PC-9 (cell line): ENCODE measurements at regions of chr14 and their contacts with region 1.

Region 1: GRCh38 chr14:69586404-69586803 is 11.7 kb upstream of the CCDC177 start:
- DNase-seq: no peak
- H3K4me3 ChIP-seq: no peak overlapping the region
- H3K27ac ChIP-seq: no peak overlapping the region
- H3K4me1 ChIP-seq: no peaks in the 10 kb centered on the region
- H3K27me3 ChIP-seq: no peaks in the 10 kb centered on the region
- CTCF ChIP-seq: no peak

Region 2: GRCh38 chr14:69535230-69535848 is 51.1 kb before region 1 on chr14:
- CTCF ChIA-PET with region 1: no interaction called
- POLR2A ChIA-PET with region 1: no interaction called
- intact Hi-C with region 1: loop called (anchors 2 kb)
- DNase-seq: peak in 1 of 2 experiments; percentile 34
- H3K4me3 ChIP-seq: no peak overlapping the region
- H3K27ac ChIP-seq: no peak overlapping the region
- H3K4me1 ChIP-seq: peaks cover 33% of the 10 kb centered on the region
- H3K27me3 ChIP-seq: no peaks in the 10 kb centered on the region
- CTCF ChIP-seq: peak; percentile 74

Region 3: DNA sequence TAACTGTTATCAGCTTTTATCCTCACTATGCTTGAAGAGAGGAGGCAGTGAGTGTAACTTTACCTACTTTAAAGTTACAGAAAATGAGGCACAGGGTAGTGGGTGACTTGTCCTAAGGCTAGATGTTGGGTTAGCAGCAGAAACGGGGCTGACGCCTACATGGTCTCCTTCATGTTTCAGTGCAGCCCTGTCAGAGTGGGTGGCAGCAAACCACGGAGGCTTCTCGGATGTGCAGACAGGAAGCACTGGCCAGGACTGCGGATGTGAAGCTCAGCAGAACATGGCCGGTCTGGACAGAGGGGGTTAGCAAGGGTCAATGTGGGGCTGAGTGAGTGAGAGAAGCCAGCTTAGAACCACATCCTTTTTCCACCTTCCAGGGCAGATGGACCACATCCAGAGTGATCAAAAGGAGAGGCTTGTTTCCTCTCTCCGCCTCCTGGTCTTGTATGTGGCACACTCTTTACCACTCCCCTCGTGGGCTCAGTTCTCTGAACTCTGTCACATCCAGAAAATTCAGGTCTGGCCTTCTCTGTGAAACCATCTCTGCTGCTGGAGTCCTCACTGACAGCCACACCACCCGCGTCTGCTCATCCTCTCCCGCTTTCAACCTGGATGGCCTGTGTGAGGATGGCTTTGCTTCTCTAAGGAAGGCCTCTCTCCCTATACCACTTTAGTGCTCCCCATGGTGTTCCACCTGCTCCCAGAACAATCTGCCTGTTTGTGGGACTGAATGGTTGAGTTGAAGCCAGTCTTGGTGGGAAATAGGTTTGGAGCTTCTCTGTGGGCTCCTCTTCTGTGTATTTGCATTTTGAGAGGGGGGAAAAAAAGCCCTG is 39.1 kb after region 1 on chr14:
- CTCF ChIA-PET with region 1: no interaction called
- POLR2A ChIA-PET with region 1: no interaction called
- intact Hi-C with region 1: no loop called
- DNase-seq: no peak
- H3K4me3 ChIP-seq: no peak overlapping the region
- H3K27ac ChIP-seq: no peak overlapping the region
- H3K4me1 ChIP-seq: peaks cover under 1% of the 10 kb centered on the region; the same call in 1 of the 2 replicates
- H3K27me3 ChIP-seq: no peaks in the 10 kb centered on the region
- CTCF ChIP-seq: no peak

Region 4: DNA sequence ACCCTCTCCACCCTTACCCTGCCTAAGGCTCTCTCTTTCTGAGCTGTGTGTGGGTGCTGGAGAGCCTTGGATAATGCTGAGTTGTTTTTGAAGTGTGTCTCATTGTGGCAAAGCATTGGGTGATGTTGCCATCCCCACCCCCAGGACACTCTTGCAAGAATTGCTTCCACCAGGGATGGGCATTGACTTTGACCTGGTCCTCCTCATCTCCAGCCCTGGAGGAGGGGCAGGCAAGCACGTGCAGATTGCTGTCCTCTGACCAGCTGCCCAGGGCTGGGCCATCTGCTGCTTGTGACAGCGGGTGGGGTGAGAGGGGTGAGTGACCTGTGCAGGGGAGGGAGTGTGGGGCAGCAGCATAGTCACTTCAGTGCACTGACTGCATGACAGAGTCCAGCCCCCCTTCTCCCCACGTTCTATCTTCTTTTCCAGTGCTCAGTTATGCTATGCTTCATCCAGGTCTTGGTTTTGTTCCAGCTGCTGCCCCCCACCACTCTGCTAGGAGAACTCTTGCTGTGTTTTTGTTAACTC is 51.2 kb after region 1 on chr14:
- CTCF ChIA-PET with region 1: no interaction called
- POLR2A ChIA-PET with region 1: no interaction called
- intact Hi-C with region 1: no loop called
- DNase-seq: no peak
- H3K4me3 ChIP-seq: no peak overlapping the region
- H3K27ac ChIP-seq: no peak overlapping the region
- H3K4me1 ChIP-seq: peaks cover 22% of the 10 kb centered on the region
- H3K27me3 ChIP-seq: no peaks in the 10 kb centered on the region
- CTCF ChIP-seq: no peak

Region 5: GRCh38 chr14:69657950-69658355 is 71.5 kb after region 1 on chr14:
- CTCF ChIA-PET with region 1: no interaction called
- POLR2A ChIA-PET with region 1: no interaction called
- intact Hi-C with region 1: loop called (anchors 2 kb)
- DNase-seq: peak; percentile 84 to 98
- H3K4me3 ChIP-seq: peak overlapping the region; percentile 22; the same call in 1 of the 2 replicates
- H3K27ac ChIP-seq: peak overlapping the region; percentile 90
- H3K4me1 ChIP-seq: peaks cover 89% of the 10 kb centered on the region
- H3K27me3 ChIP-seq: no peaks in the 10 kb centered on the region
- CTCF ChIP-seq: no peak

Region 6: DNA sequence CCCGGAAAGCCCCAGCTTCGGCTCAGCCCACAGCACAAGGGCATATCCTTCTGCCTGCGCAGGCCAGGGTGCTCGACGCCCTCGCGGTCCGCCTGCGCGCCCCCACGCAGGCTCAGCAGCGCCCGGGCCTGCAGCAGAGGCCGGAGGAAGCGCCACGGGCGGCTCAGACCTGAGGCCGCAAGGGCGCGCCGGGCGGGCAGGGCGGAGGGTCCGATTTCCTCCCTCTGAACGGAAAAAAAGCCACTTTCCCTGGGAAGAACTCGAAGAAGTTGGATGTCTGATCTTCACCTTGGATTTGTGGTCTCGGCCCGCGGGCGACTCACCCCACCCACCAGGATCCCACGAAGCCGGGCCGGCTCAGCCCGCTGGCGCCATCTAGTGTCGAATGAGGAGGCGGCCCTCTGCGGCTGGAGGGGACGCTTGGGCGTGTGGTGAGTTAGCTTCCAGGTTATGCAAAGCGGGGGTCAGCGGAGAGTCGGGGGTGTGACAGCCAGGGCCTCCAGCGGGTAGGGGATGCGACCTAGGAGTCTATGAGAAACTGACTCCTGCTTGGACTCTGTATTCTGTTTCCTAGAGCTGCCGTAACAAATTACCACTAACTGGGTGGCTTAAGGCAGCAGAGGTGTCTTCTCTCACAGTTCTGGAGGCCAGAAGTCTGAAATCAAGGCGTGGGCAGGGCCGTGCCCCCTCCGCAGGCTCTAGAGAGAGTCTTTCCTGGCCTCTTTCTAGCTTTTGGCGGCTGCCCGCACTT is 140.5 kb after region 1 on chr14:
- CTCF ChIA-PET with region 1: interaction called, 17 read pairs
- POLR2A ChIA-PET with region 1: no interaction called
- intact Hi-C with region 1: loop called (anchors 1 kb)
- DNase-seq: peak in 1 of 2 experiments; percentile 82
- H3K4me3 ChIP-seq: peak overlapping the region; percentile 52; the same call in 1 of the 2 replicates
- H3K27ac ChIP-seq: no peak overlapping the region
- H3K4me1 ChIP-seq: 0 out of 2 replicates have a peak, but pooled peaks cover 3% of the 10 kb centered on the region
- H3K27me3 ChIP-seq: no peaks in the 10 kb centered on the region
- CTCF ChIP-seq: peak; percentile 99

Region 7: DNA sequence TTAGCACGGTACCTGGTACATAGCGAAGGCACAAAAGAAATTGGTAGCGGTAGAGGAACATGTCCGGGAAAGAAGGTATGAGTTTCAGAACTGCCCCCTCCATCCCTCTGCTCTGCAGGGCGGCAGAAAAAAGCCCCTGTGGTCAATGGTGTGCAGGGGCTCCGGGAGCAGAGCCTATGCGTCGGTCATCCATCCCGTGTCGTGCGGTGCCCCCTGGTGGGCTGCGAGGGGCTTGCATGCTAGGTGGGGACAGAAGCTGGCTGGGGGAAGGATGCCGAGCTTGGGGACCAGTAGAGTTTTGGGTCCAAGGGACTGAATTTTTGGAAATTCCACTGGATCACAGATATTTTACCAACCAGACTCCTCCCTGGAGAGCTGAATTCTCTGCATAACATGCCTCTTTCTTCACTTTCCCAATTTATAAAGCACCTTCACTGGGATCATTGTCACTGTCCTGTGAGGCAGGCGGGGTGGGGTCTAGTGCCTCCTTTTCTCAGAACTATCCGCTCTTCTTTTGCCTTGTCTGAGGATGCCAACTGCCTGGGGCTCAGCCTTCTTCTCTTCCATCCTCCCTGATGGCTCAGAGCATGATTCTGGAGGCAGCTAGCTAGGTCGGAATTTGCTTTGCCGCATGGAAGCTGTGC is 441.5 kb after region 1 on chr14:
- CTCF ChIA-PET with region 1: no interaction called
- POLR2A ChIA-PET with region 1: no interaction called
- intact Hi-C with region 1: loop called (anchors 5 kb)
- DNase-seq: peak in 1 of 2 experiments; percentile 59
- H3K4me3 ChIP-seq: no peak overlapping the region
- H3K27ac ChIP-seq: no peak overlapping the region
- H3K4me1 ChIP-seq: no peaks in the 10 kb centered on the region
- H3K27me3 ChIP-seq: peaks cover 9% of the 10 kb centered on the region; the same call in 1 of the 2 replicates
- CTCF ChIP-seq: peak; percentile 96